Activated naive CD4-positive, alpha-beta T cell treated with anti-CD3 and anti-CD28 coated beads, Interleukin-2, amount 10 ng/mL, durations not matched to agents 7 days and 5 days (primary cell): ENCODE measurements at regions of chr4 and their contacts with region 1.

Region 1: GRCh38 chr4:16794816-16795445 is 103.5 kb downstream of the LDB2 start:
- DNase-seq: peak; percentile 61
- H3K4me3 Mint-ChIP-seq: no peak overlapping the region
- H3K27ac Mint-ChIP-seq: no peak overlapping the region
- H3K4me1 Mint-ChIP-seq: no peaks in the 10 kb centered on the region
- H3K27me3 Mint-ChIP-seq: peaks cover 4% of the 10 kb centered on the region

Region 2: DNA sequence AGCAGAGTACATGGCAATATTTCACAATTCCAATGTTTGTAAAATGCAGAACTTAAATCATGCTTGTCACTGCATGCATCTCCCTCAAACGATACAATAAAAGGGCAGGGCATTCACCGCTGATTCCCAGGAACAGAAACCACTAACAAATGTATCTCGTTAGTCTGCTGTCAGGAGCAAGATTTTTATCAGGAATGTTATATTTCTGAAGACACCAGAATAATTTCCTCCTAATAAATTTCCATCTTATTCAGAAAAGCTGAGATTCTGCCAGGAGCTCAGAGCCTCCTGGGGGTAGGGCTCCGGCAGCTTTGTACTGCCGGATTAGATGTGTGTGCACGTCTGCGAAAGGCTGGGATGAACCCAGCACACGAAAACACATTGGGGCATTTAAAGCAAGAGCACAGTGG is 157.5 kb after region 1 on chr4:
- CTCF ChIA-PET with region 1: no interaction called
- DNase-seq: no peak
- H3K4me3 Mint-ChIP-seq: no peak overlapping the region
- H3K27ac Mint-ChIP-seq: no peak overlapping the region
- H3K4me1 Mint-ChIP-seq: no peaks in the 10 kb centered on the region
- H3K27me3 Mint-ChIP-seq: no peaks in the 10 kb centered on the region

Region 3: GRCh38 chr4:17265139-17265538 is 470.2 kb after region 1 on chr4:
- CTCF ChIA-PET with region 1: no interaction called
- DNase-seq: no peak
- H3K4me3 Mint-ChIP-seq: no peak overlapping the region
- H3K27ac Mint-ChIP-seq: no peak overlapping the region
- H3K4me1 Mint-ChIP-seq: no peaks in the 10 kb centered on the region
- H3K27me3 Mint-ChIP-seq: peaks cover 6% of the 10 kb centered on the region

Region 4: DNA sequence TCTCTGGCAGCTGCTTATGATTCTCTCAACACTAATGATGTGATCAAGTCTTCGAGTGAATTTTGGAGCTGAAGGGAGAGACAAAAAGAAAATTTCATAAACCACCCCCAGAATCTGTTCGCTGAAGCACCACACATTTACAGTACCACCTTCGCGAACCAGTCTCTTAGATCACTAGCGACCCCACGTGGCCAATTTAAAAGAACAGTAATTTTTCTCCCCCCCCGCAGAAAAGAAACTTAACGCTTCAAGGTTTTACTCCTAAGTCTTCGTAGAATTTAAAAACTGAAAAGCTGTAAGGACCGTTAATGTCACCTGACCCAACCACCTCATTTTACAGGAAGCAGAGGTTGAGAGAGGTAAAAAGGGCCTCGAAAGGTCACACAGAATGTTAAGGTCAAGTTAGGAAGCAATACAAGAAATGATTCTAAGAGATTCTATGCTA is 529.5 kb after region 1 on chr4:
- CTCF ChIA-PET with region 1: interaction called, 14 read pairs
- DNase-seq: peak; percentile 56
- H3K4me3 Mint-ChIP-seq: no peak overlapping the region
- H3K27ac Mint-ChIP-seq: no peak overlapping the region
- H3K4me1 Mint-ChIP-seq: peaks cover 9% of the 10 kb centered on the region
- H3K27me3 Mint-ChIP-seq: peaks cover 23% of the 10 kb centered on the region